CD8-positive, alpha-beta T cell (primary cell): ENCODE measurements at regions of chr2 and their contacts with region 1.

Region 1: DNA sequence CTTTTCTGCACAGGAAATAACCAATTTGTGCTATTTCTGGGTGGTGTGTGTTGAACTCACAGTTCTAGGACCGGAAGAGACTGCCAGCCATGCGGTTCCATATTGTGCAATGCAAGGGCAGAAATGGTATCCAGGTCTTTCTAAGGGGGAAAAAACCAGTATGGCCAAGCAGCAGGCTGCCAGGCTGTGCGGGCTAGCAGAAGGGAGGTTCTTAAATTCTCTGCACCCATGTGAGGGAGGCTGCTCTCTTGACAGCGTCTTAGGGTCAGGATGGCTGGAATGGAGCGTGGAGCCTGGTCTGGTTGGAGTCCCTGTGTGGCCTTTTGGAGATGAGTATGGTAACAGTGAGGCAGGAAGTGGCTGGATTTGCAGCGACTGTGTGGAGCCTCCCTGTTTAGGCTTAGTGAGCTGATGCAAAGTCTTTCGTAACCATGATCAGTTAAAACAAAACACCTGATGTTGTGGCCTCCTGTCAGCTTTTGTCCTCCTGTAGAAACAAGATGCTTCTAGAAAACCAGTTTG is 52.6 kb downstream of the NCK2 start:
- DNase-seq: peak in 5 of 9 experiments; percentile 42 to 84 (median 65)
- ATAC-seq: peak; percentile 17
- H3K4me3 ChIP-seq: peak overlapping the region in 1 of 2 experiments; percentile 31
- H3K4me3 Mint-ChIP-seq: peak overlapping the region; percentile 74
- H3K27ac ChIP-seq: peak overlapping the region; percentile 51 to 88
- H3K27ac Mint-ChIP-seq: peak overlapping the region; percentile 96
- H3K4me1 ChIP-seq: peaks cover 92% of the 10 kb centered on the region
- H3K4me1 Mint-ChIP-seq: peaks cover 96% of the 10 kb centered on the region
- H3K27me3 ChIP-seq: no peaks in the 10 kb centered on the region
- H3K27me3 Mint-ChIP-seq: no peaks in the 10 kb centered on the region
- CTCF ChIP-seq: no peak

Region 2: GRCh38 chr2:105744091-105744908 is 53.1 kb before region 1 on chr2:
- CTCF ChIA-PET with region 1: interaction called, 6 read pairs
- POLR2A ChIA-PET with region 1: interaction called, 32 read pairs
- intact Hi-C with region 1: loop called in 1 of 2 experiments (anchors 2 kb)
- DNase-seq: peak; percentile 37 to 87 (median 70)
- ATAC-seq: peak; percentile 74
- H3K4me3 ChIP-seq: peak overlapping the region; percentile 31 to 49
- H3K4me3 Mint-ChIP-seq: peak overlapping the region; percentile 86
- H3K27ac ChIP-seq: peak overlapping the region; percentile 31 to 51
- H3K27ac Mint-ChIP-seq: peak overlapping the region; percentile 94
- H3K4me1 ChIP-seq: peaks cover 58% of the 10 kb centered on the region
- H3K4me1 Mint-ChIP-seq: peaks cover 78% of the 10 kb centered on the region
- H3K27me3 ChIP-seq: no peaks in the 10 kb centered on the region
- H3K27me3 Mint-ChIP-seq: no peaks in the 10 kb centered on the region
- CTCF ChIP-seq: no peak

Region 3: GRCh38 chr2:105782123-105782522 is 15.2 kb before region 1 on chr2:
- CTCF ChIA-PET with region 1: interaction called, 10 read pairs
- POLR2A ChIA-PET with region 1: interaction called, 5 read pairs
- intact Hi-C with region 1: loop called in 1 of 2 experiments (anchors 2 kb)
- DNase-seq: peak in 3 of 9 experiments; percentile 40 to 66 (median 57)
- ATAC-seq: peak; percentile 41
- H3K4me3 ChIP-seq: no peak overlapping the region
- H3K4me3 Mint-ChIP-seq: peak overlapping the region; percentile 81
- H3K27ac ChIP-seq: peak overlapping the region in 1 of 2 experiments; percentile 31
- H3K27ac Mint-ChIP-seq: peak overlapping the region; percentile 98
- H3K4me1 ChIP-seq: peaks cover 99% of the 10 kb centered on the region
- H3K4me1 Mint-ChIP-seq: peaks cover 94% of the 10 kb centered on the region
- H3K27me3 ChIP-seq: no peaks in the 10 kb centered on the region
- H3K27me3 Mint-ChIP-seq: no peaks in the 10 kb centered on the region
- CTCF ChIP-seq: peak; percentile 62

Region 4: GRCh38 chr2:105834931-105835330 is 37.6 kb after region 1 on chr2:
- CTCF ChIA-PET with region 1: interaction called, 4 read pairs
- POLR2A ChIA-PET with region 1: interaction called, 5 read pairs
- intact Hi-C with region 1: loop called in 1 of 2 experiments (anchors 2 kb)
- DNase-seq: peak in 2 of 9 experiments; percentile 29 to 60
- ATAC-seq: peak; percentile 42
- H3K4me3 ChIP-seq: no peak overlapping the region
- H3K4me3 Mint-ChIP-seq: no peak overlapping the region
- H3K27ac ChIP-seq: peak overlapping the region; percentile 36 to 62
- H3K27ac Mint-ChIP-seq: peak overlapping the region; percentile 83
- H3K4me1 ChIP-seq: peaks cover 43% of the 10 kb centered on the region
- H3K4me1 Mint-ChIP-seq: peaks cover 73% of the 10 kb centered on the region
- H3K27me3 ChIP-seq: no peaks in the 10 kb centered on the region
- H3K27me3 Mint-ChIP-seq: no peaks in the 10 kb centered on the region
- CTCF ChIP-seq: no peak

Region 5: DNA sequence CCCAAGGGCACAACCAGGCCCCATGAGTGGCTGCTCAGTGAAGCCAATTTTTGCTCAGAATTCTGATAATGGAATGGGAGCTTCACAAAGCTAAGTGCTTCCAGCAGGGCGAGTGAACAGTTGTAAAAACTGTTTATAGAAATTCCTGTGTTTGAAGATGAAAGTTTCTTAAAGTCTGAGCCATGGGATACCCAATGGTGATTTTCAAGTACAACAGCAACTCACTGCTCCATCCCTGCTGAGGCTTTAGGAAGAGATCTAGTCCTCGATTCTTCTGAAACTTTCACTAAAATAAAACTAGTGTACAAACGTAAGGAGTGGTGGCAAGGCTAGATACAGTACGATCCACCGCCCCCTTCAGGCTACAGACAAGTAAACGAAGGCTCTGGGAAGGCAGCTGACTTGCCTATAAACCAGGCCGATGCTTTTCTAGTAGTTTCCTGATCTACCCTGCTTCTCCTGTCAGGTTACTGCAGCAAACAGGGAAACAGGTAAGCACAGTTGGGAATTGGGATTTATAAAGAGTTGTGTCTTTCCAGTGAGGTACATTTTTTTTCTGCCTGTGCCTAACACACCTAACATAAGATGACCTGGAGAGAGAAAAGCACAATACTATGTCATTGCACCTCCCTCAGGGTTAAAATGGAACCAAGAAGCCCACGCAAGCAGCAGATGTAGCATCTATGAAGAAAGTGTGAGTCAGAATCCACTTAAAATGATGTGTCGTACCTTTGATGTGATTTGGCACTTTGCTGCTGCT is 288.0 kb after region 1 on chr2:
- CTCF ChIA-PET with region 1: interaction called, 7 read pairs
- POLR2A ChIA-PET with region 1: interaction called, 3 read pairs
- intact Hi-C with region 1: loop called in 1 of 2 experiments (anchors 5 kb)
- DNase-seq: peak in 7 of 9 experiments; percentile 44 to 81 (median 75)
- ATAC-seq: peak; percentile 94
- H3K4me3 ChIP-seq: peak overlapping the region in 1 of 2 experiments; percentile 5
- H3K4me3 Mint-ChIP-seq: peak overlapping the region; percentile 66
- H3K27ac ChIP-seq: peak overlapping the region; percentile 46 to 59
- H3K27ac Mint-ChIP-seq: peak overlapping the region; percentile 98
- H3K4me1 ChIP-seq: peaks cover 56% of the 10 kb centered on the region
- H3K4me1 Mint-ChIP-seq: peaks cover 72% of the 10 kb centered on the region
- H3K27me3 ChIP-seq: no peaks in the 10 kb centered on the region
- H3K27me3 Mint-ChIP-seq: no peaks in the 10 kb centered on the region
- CTCF ChIP-seq: peak; percentile 57